ENCODE measurements at regions of chr4 and their contacts with region 1.

Region 1: GRCh38 chr4:184464759-184465454 is 9.4 kb downstream of the IRF2 start:
- DNase-seq: no peak
- H3K4me3 ChIP-seq: no peak overlapping the region
- H3K4me3 Mint-ChIP-seq: no peak overlapping the region
- H3K27ac ChIP-seq: no peak overlapping the region
- H3K27ac Mint-ChIP-seq: peak overlapping the region in 5 of 7 donors; percentile 14 to 79 (median 38)
- H3K4me1 ChIP-seq: peaks cover 74% of the 10 kb centered on the region
- H3K4me1 Mint-ChIP-seq: peaks cover 60 to 90% (median 75%) of the 10 kb centered on the region in 4 donors
- H3K27me3 ChIP-seq: no peaks in the 10 kb centered on the region
- H3K27me3 Mint-ChIP-seq: no peaks in the 10 kb centered on the region

Region 2: DNA sequence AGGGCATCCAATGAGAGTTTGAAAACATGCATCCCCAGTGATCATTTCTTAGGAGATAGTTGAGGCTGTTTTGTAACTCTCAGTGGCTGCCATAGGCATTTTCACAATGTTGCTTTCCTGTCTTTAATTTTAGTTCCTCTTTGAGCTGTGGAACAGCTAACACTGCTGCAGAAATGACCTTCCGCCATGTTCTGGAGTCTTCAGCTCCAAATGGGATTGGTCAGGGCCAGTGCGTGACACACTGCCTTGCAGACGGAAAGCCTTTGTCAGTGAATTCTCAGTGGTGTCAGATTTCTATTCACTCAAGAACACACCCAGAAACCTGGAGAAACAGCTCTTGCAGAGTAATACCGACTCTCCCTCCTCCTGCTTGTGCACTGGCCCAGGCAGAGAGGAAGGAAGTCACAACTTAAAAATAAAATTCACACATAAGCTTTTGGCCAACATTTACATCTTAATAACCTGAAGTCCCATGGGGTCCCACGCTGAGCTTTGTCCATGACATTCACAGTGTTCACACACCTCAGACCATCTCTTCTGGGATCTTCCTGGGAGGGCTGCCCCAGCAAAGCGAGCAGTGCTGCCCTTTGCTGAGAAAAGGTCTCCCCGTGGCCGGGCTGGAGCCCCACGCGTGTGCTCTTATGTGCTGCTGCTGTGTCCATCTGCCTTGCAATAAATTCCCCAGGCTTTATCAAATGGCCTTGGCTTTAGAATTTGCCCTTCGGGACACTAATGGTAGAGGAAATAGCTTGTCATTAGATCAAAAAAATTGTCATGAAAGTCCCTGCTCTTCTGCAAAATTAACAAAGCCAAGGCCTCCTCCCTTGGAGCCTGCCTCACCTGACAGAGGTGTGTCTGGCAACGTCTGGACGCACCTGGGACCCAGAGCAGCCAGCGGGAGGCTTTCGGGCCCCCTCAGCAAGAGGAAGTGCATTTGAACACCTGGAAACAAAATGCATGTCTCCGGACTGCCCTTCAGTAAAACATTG is 117.4 kb before region 1 on chr4:
- CTCF ChIA-PET with region 1: no interaction called
- POLR2A ChIA-PET with region 1: no interaction called
- intact Hi-C with region 1: no loop called
- DNase-seq: no peak
- H3K4me3 ChIP-seq: no peak overlapping the region
- H3K4me3 Mint-ChIP-seq: peak overlapping the region in 1 of 8 donors; percentile 58
- H3K27ac ChIP-seq: no peak overlapping the region
- H3K27ac Mint-ChIP-seq: peak overlapping the region in 1 of 7 donors; percentile 56
- H3K4me1 ChIP-seq: peaks cover 13% of the 10 kb centered on the region
- H3K4me1 Mint-ChIP-seq: peaks cover 9 to 18% (median 12%) of the 10 kb centered on the region in 4 donors
- H3K27me3 ChIP-seq: no peaks in the 10 kb centered on the region
- H3K27me3 Mint-ChIP-seq: peaks cover 0 to 2% of the 10 kb centered on the region in 2 donors

Region 3: DNA sequence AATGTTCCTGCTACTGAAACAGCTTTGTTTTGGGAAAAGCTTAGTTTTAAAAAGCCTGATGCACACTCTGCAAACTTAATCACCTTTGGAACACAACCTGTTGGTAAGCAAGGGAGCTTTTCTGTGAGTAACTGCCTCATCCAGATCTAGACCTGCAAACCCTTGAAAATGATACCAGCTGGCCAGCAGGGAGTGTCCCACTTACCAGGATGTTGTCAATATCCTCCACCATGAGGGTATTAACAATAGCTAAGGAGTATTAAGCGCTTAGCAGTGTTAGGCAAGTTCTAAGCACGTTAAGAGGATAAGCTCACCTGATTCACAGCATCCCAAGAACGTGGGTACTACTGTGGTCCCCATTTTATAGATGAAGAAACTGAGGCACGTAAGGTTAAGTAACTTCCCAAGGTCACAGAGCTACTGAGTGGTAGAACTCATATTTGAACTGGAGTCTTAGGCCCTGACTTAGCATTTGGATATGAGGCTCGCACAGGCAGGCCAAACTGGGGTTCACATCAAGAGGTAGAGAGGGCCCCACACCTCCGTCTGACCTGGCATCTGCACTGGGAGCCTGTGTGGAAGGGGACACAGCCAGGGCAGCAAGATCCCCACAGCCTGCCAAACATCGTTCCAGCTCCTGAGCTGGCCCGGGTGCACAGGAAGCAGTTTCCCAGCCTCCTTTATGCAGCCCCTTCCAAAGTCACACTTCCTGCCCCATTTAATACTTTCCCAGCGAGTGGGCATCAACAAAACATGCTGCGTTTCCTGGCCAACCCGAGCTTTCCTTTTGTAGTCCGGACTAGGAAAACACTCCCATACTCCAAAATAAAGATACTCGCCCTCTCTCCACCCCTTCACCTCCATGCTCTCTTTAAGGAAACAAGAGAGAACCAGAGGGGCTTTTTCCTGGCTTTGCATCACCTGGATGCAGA is 23.2 kb before region 1 on chr4:
- CTCF ChIA-PET with region 1: no interaction called
- POLR2A ChIA-PET with region 1: interaction called, 3 read pairs
- intact Hi-C with region 1: loop called (anchors 1 kb)
- DNase-seq: no peak
- H3K4me3 ChIP-seq: no peak overlapping the region
- H3K4me3 Mint-ChIP-seq: peak overlapping the region in 4 of 8 donors; percentile 1 to 55 (median 31)
- H3K27ac ChIP-seq: no peak overlapping the region
- H3K27ac Mint-ChIP-seq: peak overlapping the region in 6 of 7 donors; percentile 30 to 86 (median 68)
- H3K4me1 ChIP-seq: peaks cover 86% of the 10 kb centered on the region
- H3K4me1 Mint-ChIP-seq: peaks cover 61 to 92% (median 81%) of the 10 kb centered on the region in 4 donors
- H3K27me3 ChIP-seq: no peaks in the 10 kb centered on the region
- H3K27me3 Mint-ChIP-seq: no peaks in the 10 kb centered on the region

Region 4: DNA sequence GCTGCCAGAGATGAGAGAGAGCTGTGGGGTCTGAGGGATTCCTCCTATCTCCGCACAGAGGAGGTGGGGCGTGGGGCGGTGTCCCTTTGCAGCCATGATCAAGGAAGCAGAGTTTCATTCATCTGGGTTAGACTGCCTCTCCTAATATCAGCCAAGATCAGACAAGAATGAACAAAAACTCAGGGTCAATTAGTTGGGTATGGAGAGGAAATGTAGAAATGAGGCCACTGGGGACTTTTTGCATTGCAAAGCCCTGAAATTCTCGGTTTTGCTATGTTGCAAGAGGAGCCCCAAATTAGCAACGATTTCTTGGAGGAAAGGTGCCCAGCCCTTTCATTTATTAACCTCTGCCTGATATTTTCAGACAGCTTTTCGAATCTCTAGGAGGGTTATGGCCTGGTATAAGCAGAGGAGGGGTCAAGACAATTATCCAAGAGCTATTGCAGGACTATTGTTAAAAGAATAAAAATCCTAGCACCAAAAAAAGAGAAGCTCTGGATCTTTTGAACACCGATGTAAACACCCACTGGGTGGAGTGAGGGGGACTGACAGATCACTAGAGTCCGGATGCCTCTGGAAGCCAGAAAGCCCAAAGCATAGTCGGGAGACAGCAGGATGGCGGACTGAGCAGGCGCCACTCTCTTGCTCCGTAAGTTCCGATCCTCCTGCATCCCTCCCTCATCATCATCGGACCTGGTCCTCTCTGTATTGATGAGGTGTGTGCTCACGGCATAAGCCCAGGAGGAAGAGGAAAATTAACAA is 395.3 kb after region 1 on chr4:
- CTCF ChIA-PET with region 1: no interaction called
- POLR2A ChIA-PET with region 1: no interaction called
- intact Hi-C with region 1: no loop called
- DNase-seq: no peak
- H3K4me3 ChIP-seq: no peak overlapping the region
- H3K4me3 Mint-ChIP-seq: no peak overlapping the region
- H3K27ac ChIP-seq: no peak overlapping the region
- H3K27ac Mint-ChIP-seq: no peak overlapping the region
- H3K4me1 ChIP-seq: no peaks in the 10 kb centered on the region
- H3K4me1 Mint-ChIP-seq: no peaks in the 10 kb centered on the region
- H3K27me3 ChIP-seq: no peaks in the 10 kb centered on the region
- H3K27me3 Mint-ChIP-seq: peaks cover 18% of the 10 kb centered on the region in 2 donors

Measured in CD4-positive, alpha-beta memory T cell (primary cell).